AG04450 (cell line): ENCODE measurements at regions of chr1 and their contacts with region 1.

Region 1: DNA sequence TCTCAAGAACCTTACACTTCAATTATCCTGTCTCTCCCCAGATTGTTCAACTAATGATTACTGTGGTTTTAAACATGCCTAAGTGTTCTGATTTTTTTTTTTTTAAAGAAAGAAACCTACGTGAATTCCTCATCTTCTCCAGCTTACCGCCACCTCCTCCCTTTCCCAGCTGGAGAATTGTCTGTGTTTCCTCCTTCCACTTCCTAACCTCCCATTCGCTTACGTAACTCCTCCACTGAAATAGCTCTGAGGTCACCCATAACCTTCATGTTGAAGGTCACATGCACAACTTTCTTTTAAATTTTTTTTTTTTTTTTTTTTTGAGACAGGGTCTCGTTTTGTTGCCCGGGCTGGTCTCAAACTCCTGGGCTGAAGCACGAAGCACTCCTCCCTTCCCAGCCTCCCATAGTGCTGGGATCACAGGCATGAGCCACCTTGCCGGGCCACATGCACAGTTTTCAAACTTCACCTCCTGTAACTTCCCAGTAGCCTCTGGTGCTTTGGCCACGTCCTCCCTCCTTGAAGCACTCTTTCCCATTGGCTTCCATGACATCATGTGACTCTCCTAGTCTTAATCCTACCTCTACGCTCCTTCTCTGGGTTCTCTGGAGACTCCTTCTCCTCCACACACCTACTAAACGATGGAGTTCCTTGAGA is 9.8 kb upstream of the CAPZB start:
- DNase-seq: no peak
- H3K4me3 ChIP-seq: no peak overlapping the region
- H3K27ac ChIP-seq: no peak overlapping the region
- H3K27me3 ChIP-seq: no peaks in the 10 kb centered on the region
- CTCF ChIP-seq: no peak

Region 2: GRCh38 chr1:19220991-19221390 is 274.1 kb before region 1 on chr1:
- CTCF ChIA-PET with region 1: no interaction called
- POLR2A ChIA-PET with region 1: no interaction called
- DNase-seq: no peak
- H3K4me3 ChIP-seq: no peak overlapping the region
- H3K27ac ChIP-seq: no peak overlapping the region
- H3K27me3 ChIP-seq: no peaks in the 10 kb centered on the region
- CTCF ChIP-seq: no peak

Region 3: DNA sequence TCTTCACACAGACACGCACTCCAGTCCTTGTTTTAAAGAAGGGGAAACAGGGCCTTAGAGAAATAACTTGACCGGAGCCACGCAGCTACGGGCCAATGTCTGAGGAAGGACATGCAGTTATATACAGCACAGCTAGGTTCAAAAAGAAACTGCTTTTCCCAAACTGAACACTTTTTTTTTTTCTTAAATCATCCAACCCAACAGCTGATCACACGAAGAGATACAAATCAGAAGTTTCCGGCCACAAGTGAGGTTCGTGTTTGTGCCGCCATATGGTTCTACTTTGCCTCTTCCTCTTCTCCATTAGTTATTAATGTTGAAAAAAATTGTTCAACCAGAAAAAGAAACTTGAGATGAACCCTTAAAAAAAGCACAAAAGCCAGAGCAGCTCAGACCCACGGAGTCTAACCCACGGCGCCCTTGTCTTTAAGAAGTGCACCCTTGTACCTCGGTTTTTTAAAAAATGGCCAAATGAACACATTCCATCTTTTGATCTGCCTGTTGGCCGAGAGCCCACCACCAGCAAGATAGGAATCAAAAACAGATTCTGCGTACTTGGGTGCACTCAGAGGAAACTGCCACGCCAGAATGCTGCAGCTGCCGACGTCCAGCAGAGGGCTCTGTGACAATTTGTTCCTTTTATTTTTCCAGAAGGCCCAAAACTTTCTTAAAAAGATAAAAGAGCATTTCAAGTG is 104.1 kb before region 1 on chr1:
- CTCF ChIA-PET with region 1: no interaction called
- POLR2A ChIA-PET with region 1: no interaction called
- DNase-seq: peak; percentile 64
- H3K4me3 ChIP-seq: peak overlapping the region; percentile 25
- H3K27ac ChIP-seq: peak overlapping the region; percentile 81
- H3K27me3 ChIP-seq: no peaks in the 10 kb centered on the region
- CTCF ChIP-seq: peak; percentile 92

Region 4: DNA sequence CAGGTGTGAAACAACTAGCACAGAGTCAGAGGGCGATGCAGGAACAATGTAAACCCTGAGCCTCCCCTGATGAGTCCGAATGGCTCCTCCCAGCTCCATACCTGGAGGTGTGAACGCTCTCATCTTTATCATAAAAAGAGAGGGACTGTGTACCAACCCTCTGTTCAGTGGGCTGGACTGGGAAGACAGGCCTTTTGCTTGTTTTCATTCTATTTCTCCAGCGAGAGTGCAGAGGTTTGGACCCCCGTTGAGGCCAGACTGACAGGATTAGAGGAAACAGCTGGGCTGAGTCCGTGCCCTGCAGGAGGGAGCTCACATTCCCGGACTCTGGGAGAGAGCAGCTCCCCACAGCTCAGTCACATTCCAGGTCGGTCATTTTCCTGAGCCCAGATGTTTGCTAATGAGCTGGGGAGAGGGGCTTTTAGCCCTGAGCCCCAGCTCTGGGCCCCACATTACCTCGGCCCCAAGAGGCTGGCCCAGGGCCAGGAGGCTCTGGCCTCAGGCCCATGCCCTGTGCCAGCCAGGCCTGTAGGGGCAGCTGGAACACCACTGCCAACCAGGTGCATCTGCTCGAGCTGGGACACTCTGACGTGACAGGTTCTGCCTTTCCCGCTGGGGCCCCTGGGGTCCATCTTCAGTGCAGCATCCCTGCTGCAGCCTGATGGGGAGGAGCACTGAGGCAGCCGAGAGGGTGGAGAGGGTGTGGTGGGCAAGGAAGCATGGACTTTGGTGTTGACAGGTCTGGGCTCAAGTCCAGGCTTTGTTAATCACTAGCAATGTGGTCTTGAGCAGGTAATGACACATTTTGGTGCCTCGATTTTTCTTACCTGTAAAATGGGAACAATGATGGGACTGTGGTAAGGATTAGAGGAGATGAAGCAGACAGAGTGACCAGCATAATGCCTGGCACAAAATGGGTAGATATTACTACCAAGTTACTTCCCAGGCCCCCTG is 145.5 kb after region 1 on chr1:
- CTCF ChIA-PET with region 1: no interaction called
- POLR2A ChIA-PET with region 1: interaction called, 10 read pairs
- DNase-seq: no peak
- H3K4me3 ChIP-seq: no peak overlapping the region
- H3K27ac ChIP-seq: peak overlapping the region; percentile 31
- H3K27me3 ChIP-seq: no peaks in the 10 kb centered on the region
- CTCF ChIP-seq: no peak